ENCODE measurements at regions of chr2 and their contacts with region 1.

Region 1: GRCh38 chr2:204325468-204325867 is 219.8 kb upstream of the PARD3B start:
- DNase-seq: peak in 41 of 42 donors; percentile 26 to 88 (median 64)

Region 2: DNA sequence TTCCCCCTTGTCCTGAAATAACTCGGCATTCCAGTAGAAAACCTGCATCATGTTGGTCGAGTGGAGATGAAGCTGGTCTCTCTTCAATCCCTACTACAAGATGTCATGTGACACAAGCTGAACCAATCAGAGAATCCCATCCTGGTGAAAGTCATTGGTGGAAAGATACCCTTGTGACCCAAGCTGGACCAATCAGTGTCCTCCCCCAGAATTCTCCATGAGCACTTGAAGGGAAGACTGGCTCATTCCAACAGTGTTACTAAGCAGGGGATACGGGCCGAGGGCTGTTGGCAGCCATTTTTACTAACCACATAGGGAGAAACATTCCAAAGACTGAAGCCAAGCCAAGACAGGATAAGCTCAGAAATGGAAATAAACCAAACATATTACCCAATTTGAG is 90.6 kb before region 1 on chr2:
- intact Hi-C with region 1: no loop called
- DNase-seq: no peak

Region 3: DNA sequence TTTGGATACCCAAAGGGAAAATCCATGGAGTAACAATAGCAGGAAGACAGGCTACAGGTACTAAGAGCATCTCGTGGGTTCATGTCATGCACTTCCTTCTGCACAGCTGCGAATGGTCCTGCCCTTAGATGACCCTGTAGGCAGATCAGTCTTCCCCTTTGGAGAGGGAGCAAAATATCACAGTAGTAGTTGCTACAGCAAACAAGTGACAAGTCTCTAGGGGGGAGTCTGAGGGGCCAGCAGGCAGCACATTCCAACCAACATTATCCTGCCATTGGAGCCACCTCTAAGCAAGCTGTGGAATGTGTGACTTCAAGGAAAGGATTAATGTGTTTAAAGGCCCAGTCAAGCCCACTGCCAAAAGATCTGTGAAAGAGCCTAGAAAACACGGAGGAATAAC is 53.4 kb before region 1 on chr2:
- intact Hi-C with region 1: loop called (anchors 10 kb)
- DNase-seq: no peak

Region 4: DNA sequence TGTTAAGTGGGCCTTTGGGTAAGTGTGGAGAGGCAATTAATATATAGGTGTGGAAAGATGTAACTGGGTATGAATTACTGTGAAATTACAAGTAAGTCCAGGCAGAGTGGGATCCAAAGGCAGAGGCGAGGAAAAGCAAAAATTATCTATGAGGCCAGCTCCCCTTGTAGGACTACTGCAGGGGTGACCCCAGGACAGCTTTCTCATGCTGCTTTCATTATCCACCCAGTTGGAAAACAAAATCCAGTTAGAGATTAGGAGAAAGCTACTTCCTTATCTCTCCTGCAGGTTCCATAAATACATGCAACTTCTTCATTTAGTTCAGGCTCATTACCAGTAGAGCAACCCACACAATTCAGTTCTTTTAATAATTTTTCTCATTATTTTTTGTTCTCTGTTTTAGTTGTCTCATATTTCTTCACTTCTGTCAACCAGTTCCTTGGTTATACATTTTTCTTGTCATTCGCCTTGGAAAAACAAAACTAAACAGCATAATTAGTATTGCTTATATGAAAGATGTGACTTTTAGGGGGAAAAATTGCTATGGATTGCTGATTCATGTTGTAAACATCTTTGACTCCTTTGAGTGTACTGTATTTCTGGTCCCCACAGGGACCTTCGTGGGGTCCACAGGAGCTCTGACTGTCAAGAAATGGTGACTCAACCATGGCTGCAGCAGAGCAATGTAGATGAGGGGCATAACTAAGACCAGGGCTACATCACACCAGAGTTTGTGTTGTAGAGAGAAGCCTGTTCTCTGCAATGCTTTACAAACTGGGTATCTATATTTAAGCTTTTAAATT is 109.4 kb after region 1 on chr2:
- intact Hi-C with region 1: no loop called
- DNase-seq: no peak

Region 5: DNA sequence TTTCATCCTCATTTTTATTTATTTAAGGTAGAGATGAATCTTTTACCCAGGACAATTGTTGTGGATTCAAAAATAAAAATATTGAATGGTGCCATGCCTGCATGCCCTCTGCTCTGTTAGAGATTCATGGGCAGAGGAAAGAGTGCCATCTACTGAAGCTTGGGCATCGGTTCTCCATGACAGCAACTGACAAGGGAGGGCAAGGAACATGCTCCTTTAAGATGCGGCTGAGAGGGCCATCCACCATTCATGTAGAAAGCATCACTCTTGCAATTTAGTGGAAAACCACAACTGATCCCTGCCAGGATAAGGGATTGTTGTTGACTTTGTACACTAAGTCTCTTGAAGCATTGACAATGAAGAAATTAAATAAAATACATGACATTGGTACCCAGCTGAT is 299.7 kb after region 1 on chr2:
- intact Hi-C with region 1: loop called (anchors 10 kb)
- DNase-seq: peak in 41 of 42 donors; percentile 4 to 83 (median 52)

Region 6: GRCh38 chr2:204691911-204692510 is 366.5 kb after region 1 on chr2:
- intact Hi-C with region 1: loop called (anchors 10 kb)
- DNase-seq: peak in 27 of 42 donors; percentile 7 to 76 (median 38)

Region 7: GRCh38 chr2:205680067-205680466 is 1354.6 kb after region 1 on chr2:
- intact Hi-C with region 1: loop called (anchors 10 kb)
- DNase-seq: peak in 31 of 42 donors; percentile 28 to 87 (median 63)